MCF 10A (cell line): ENCODE measurements at regions of chr10 and their contacts with region 1.

Region 1: GRCh38 chr10:97498076-97498840 is at the start of gene MMS19:
- DNase-seq: peak; percentile 98
- H3K4me3 Mint-ChIP-seq: peak within 1 kb of the TSS; percentile 88
- H3K27ac Mint-ChIP-seq: peak within 1 kb of the TSS; percentile 91
- H3K4me1 Mint-ChIP-seq: peaks cover 29% of the 10 kb centered on the region
- H3K27me3 Mint-ChIP-seq: no peaks in the 10 kb centered on the region
- CTCF ChIP-seq: no peak
- total RNA-seq, gene MMS19: 67.0 and 67.2 TPM in 2 replicates

Region 2: GRCh38 chr10:97365761-97366351 is 132.4 kb before region 1 on chr10:
- CTCF ChIA-PET with region 1: no interaction called
- POLR2A ChIA-PET with region 1: no interaction called
- intact Hi-C with region 1: no loop called
- DNase-seq: no peak
- H3K4me3 Mint-ChIP-seq: no peak overlapping the region
- H3K27ac Mint-ChIP-seq: no peak overlapping the region
- H3K4me1 Mint-ChIP-seq: no peaks in the 10 kb centered on the region
- H3K27me3 Mint-ChIP-seq: no peaks in the 10 kb centered on the region
- CTCF ChIP-seq: no peak

Region 3: DNA sequence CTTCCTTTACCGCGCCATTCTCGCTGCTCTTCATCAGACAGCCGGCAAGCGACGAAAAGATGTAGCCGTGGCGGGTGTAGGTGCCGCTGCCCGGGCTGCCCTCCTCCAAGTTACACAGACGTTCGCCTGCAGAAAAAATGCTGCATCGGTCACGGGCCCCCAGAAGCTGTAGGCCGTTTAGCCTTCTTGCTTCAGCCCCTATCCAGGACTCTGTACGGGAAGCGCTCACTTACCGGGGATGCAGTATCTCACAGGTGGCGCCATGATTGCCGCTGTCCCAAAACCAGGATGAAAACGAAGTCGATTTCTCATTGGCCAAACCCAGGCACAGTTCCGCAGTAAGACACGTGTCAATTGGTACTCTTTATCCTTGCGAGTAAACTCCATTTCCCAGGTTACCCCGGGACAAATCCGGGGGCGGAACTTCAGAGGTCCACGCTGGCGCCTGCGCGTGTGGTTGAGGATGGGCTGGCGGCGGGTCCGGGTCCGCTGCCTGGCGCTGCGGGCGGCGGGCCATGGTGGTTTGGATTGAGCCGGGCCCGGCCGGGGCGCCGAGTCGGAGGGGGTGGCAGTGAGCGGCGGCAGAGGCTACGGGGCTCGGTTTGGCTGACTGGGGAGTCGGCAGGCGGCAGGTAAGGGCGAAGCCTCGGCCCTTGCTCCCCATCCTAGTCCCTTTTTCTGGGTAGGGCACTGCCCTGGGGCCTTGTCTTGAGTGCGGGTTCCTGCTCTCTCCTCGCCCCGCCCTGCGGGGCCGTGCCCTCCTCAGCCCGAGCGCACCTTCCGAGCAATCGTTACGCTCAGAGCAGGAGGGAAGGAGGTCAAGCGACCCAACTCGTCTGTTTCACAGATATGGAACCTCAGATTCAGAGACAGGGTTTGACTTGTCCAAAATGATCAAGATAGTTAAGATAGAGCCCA is 52.3 kb before region 1 on chr10 and contains the starts of genes EXOSC1 and ZDHHC16:
- CTCF ChIA-PET with region 1: no interaction called
- POLR2A ChIA-PET with region 1: interaction called, 6 read pairs
- intact Hi-C with region 1: loop called (anchors 10 kb)
- DNase-seq: peak; percentile 97
- H3K4me3 Mint-ChIP-seq: peak within 1 kb of the TSS; percentile 99
- H3K27ac Mint-ChIP-seq: peak within 1 kb of the TSS; percentile 74
- H3K4me1 Mint-ChIP-seq: peaks cover 25% of the 10 kb centered on the region
- H3K27me3 Mint-ChIP-seq: no peaks in the 10 kb centered on the region
- CTCF ChIP-seq: no peak
- total RNA-seq, gene EXOSC1: 56.5 and 62.3 TPM in 2 replicates
- total RNA-seq, gene ZDHHC16: 44.9 and 48.0 TPM in 2 replicates

Region 4: GRCh38 chr10:97463363-97464132 is 34.7 kb before region 1 on chr10:
- CTCF ChIA-PET with region 1: interaction called, 4 read pairs
- POLR2A ChIA-PET with region 1: interaction called, 15 read pairs
- intact Hi-C with region 1: no loop called
- DNase-seq: peak; percentile 74
- H3K4me3 Mint-ChIP-seq: no peak overlapping the region
- H3K27ac Mint-ChIP-seq: peak overlapping the region; percentile 46
- H3K4me1 Mint-ChIP-seq: peaks cover 16% of the 10 kb centered on the region
- H3K27me3 Mint-ChIP-seq: no peaks in the 10 kb centered on the region
- CTCF ChIP-seq: peak; percentile 79

Region 5: DNA sequence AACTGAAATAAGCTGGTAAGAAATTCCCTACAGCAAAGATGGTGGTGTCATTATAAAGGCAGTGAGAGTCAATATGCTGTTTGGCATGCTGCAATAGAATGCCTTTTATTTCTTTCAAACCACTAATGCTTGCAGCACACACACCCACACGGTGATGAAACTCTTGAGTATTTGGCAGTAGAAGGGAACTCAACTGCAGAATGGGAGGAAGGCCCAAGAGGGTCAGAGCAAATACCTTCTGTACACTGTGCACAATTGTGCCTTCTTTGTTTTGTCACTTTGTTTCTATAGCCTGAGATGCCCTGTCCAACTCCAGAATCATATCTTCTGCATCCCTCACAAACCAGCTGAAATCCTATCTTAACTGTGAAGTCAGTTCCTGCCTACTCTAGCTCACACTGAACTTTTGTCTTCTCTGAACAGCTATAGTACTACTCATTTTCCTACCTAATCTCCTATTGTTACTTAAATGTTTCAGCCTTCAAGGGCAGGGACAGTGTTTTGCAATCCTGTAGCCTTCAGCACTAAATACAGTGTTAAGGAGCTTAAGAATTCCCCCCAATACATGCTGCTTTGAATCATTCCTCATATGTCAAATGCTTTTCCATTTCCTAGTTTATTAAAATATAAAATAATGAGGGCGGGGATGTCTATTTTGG is 22.2 kb before region 1 on chr10:
- CTCF ChIA-PET with region 1: no interaction called
- POLR2A ChIA-PET with region 1: interaction called, 27 read pairs
- intact Hi-C with region 1: no loop called
- DNase-seq: peak; percentile 57
- H3K4me3 Mint-ChIP-seq: no peak overlapping the region
- H3K27ac Mint-ChIP-seq: peak overlapping the region; percentile 46
- H3K4me1 Mint-ChIP-seq: peaks cover 19% of the 10 kb centered on the region
- H3K27me3 Mint-ChIP-seq: no peaks in the 10 kb centered on the region
- CTCF ChIP-seq: no peak

Region 6: GRCh38 chr10:97534746-97535367 is 36.6 kb after region 1 on chr10:
- CTCF ChIA-PET with region 1: interaction called, 7 read pairs
- POLR2A ChIA-PET with region 1: interaction called, 6 read pairs
- intact Hi-C with region 1: loop called (anchors 2 kb)
- DNase-seq: peak; percentile 71
- H3K4me3 Mint-ChIP-seq: no peak overlapping the region
- H3K27ac Mint-ChIP-seq: no peak overlapping the region
- H3K4me1 Mint-ChIP-seq: peaks cover 10% of the 10 kb centered on the region
- H3K27me3 Mint-ChIP-seq: no peaks in the 10 kb centered on the region
- CTCF ChIP-seq: peak; percentile 56

Region 7: GRCh38 chr10:97543025-97543575 is 44.8 kb after region 1 on chr10:
- CTCF ChIA-PET with region 1: interaction called, 13 read pairs
- POLR2A ChIA-PET with region 1: interaction called, 35 read pairs
- intact Hi-C with region 1: no loop called
- DNase-seq: peak; percentile 95
- H3K4me3 Mint-ChIP-seq: no peak overlapping the region
- H3K27ac Mint-ChIP-seq: peak overlapping the region; percentile 73
- H3K4me1 Mint-ChIP-seq: peaks cover 28% of the 10 kb centered on the region
- H3K27me3 Mint-ChIP-seq: no peaks in the 10 kb centered on the region
- CTCF ChIP-seq: no peak

Region 8: DNA sequence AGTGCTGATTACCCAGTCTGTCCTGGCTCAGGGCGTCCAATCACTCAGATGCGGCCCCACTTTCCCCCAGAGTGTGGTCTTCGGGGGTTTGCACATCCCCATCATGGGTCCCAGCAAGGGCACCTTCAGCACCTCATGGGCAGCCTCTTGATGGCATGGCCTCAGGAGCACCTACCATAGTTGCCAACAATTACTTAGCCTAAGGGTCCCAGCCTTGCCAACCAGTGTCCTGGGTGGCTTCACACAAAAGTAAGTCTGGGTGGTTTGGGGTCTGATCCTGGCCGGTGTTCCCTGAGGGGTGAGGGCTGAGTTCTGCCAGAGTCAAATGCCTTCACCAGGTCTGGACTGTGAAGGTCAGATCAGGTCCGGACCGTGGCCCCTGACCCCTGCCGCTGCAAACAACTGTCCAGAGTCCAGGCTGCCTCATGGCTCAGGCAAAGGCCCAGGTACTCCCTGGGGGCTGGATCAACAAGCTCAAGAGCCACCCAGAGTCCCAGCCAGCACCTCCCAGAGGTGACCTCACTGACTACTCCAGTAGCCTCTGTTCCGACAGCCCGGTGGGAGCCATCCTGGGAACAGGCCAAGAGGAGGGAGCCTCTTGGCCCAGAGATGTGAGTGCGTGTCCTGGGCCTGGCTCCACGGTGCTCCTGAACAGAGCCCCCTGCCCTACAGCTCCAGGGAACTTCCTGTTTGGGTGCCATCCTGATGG is 209.0 kb after region 1 on chr10:
- CTCF ChIA-PET with region 1: no interaction called
- POLR2A ChIA-PET with region 1: no interaction called
- intact Hi-C with region 1: no loop called
- DNase-seq: no peak
- H3K4me3 Mint-ChIP-seq: no peak overlapping the region
- H3K27ac Mint-ChIP-seq: no peak overlapping the region
- H3K4me1 Mint-ChIP-seq: peaks cover 16% of the 10 kb centered on the region
- H3K27me3 Mint-ChIP-seq: no peaks in the 10 kb centered on the region
- CTCF ChIP-seq: no peak